Caco-2 (cell line): ENCODE measurements at regions of chr11 and their contacts with region 1.

Region 1: GRCh38 chr11:111918390-111919258 is at the start of gene C11orf52:
- DNase-seq: peak; percentile 92 to 94
- H3K4me3 ChIP-seq: peak within 1 kb of the TSS; percentile 49
- H3K4me3 Mint-ChIP-seq: peak within 1 kb of the TSS; percentile 79
- H3K27ac Mint-ChIP-seq: peak within 1 kb of the TSS; percentile 94
- H3K4me1 ChIP-seq: peaks cover 12% of the 10 kb centered on the region
- H3K4me1 Mint-ChIP-seq: peaks cover 21% of the 10 kb centered on the region
- H3K27me3 ChIP-seq: no peaks in the 10 kb centered on the region
- H3K27me3 Mint-ChIP-seq: no peaks in the 10 kb centered on the region
- CTCF ChIP-seq: peak; percentile 42 to 48
- total RNA-seq, gene C11orf52: 14.4 and 14.8 TPM in 2 replicates

Region 2: GRCh38 chr11:111788051-111788450 is 130.6 kb before region 1 on chr11:
- CTCF ChIA-PET with region 1: no interaction called
- POLR2A ChIA-PET with region 1: no interaction called
- intact Hi-C with region 1: no loop called
- DNase-seq: no peak
- H3K4me3 ChIP-seq: no peak overlapping the region
- H3K4me3 Mint-ChIP-seq: no peak overlapping the region
- H3K27ac Mint-ChIP-seq: no peak overlapping the region
- H3K4me1 ChIP-seq: no peaks in the 10 kb centered on the region
- H3K4me1 Mint-ChIP-seq: no peaks in the 10 kb centered on the region
- H3K27me3 ChIP-seq: no peaks in the 10 kb centered on the region
- H3K27me3 Mint-ChIP-seq: no peaks in the 10 kb centered on the region
- CTCF ChIP-seq: no peak

Region 3: DNA sequence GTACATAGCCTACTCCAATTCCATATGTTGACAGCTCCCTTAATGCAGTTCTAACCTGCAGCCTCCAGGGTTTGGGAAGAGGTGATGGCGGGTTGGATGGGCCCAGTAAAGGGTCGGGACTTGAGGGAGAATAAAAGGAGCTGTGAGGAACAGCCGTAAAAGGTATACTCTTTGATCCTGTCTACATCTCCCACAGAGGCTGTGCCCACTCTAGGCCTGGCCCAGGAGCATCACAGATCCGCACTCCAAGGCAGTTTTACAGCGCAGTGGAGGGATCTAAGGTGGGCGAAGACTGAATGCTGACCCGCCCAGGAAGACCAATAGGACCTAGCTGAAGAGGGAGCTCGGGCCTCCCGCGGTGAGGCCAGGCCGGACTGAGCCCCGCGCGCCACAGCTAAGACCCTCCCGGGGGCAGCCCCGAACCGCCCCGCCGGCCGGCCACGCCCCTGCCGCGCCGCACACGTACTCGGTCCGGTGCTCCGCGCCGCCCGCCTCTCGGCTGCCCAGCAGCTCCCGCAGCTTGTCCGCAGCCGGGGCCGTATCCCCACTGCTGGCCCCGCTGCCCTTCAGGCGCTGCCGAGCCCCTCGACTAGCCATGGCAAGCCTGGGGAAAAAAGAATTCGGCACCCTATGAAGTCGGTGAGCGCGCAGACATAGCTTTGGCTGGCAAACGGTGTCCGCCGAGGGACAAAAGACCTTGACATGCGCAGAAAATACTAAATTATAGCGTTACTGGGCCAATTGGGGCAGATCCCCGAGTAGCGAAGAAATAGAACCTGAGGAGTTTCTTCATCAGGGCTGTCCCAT is 47.5 kb before region 1 on chr11 and contains the start of gene ALG9:
- CTCF ChIA-PET with region 1: interaction called, 7 read pairs
- POLR2A ChIA-PET with region 1: interaction called, 9 read pairs
- intact Hi-C with region 1: loop called (anchors 2 kb)
- DNase-seq: peak; percentile 89 to 94
- H3K4me3 ChIP-seq: peak within 1 kb of the TSS; percentile 94
- H3K4me3 Mint-ChIP-seq: peak within 1 kb of the TSS; percentile 91
- H3K27ac Mint-ChIP-seq: peak within 1 kb of the TSS; percentile 53
- H3K4me1 ChIP-seq: 0 out of 2 replicates have a peak, but pooled peaks cover 3% of the 10 kb centered on the region
- H3K4me1 Mint-ChIP-seq: peaks cover 16% of the 10 kb centered on the region
- H3K27me3 ChIP-seq: no peaks in the 10 kb centered on the region
- H3K27me3 Mint-ChIP-seq: no peaks in the 10 kb centered on the region
- CTCF ChIP-seq: peak; percentile 55 to 63
- total RNA-seq, gene ALG9: 55.3 and 57.4 TPM in 2 replicates

Region 4: DNA sequence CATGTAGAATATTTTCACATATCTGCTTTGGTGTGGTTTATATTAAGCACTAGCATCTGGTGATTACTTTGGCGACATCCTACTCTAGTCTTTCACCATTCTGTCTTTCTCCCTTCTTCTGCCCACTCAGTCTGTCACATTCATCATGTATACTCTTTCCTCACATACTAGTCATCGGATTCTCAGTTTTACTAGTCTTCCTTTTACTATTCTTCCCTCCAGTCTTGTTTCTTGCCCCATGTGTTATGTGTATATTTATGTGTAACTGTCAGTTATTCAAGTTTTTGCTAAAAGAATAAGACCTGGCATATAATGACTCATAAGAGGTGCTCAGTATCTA is 14.0 kb after region 1 on chr11:
- CTCF ChIA-PET with region 1: interaction called, 14 read pairs
- POLR2A ChIA-PET with region 1: interaction called, 38 read pairs
- intact Hi-C with region 1: loop called (anchors 1 kb)
- DNase-seq: no peak
- H3K4me3 ChIP-seq: no peak overlapping the region
- H3K4me3 Mint-ChIP-seq: no peak overlapping the region
- H3K27ac Mint-ChIP-seq: no peak overlapping the region
- H3K4me1 ChIP-seq: peaks cover 17% of the 10 kb centered on the region
- H3K4me1 Mint-ChIP-seq: peaks cover 15% of the 10 kb centered on the region
- H3K27me3 ChIP-seq: no peaks in the 10 kb centered on the region
- H3K27me3 Mint-ChIP-seq: no peaks in the 10 kb centered on the region
- CTCF ChIP-seq: no peak

Region 5: DNA sequence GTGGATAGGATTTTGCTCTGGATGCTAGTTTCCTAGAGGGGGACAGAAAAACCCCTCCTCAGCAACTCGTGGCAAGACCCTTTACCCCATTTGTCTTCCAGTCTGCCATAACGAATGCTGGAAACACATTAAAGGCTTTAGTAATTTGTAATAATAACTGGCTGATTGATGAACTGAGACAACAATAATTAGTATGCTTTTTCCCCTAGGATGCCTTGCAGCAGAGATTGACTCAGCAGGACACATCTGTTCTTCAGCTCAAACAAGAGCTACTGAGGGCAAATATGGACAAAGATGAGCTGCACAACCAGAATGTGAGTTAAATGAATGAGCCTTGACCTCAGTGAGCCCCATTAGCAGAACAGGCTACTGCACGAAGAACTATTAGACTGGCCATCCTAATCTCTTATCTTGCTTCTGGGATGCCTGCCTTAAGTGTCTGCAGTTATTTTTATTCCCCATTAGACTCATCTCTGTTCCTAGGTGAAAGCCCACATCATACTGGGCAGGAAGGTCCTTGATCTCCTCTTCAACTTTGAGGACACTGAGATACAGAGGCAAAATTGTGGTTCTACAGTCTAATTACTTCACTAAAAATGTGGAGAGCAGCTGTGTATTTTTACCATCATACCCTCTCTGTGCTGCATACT is 73.7 kb after region 1 on chr11:
- CTCF ChIA-PET with region 1: interaction called, 10 read pairs
- POLR2A ChIA-PET with region 1: interaction called, 3 read pairs
- intact Hi-C with region 1: no loop called
- DNase-seq: no peak
- H3K4me3 ChIP-seq: no peak overlapping the region
- H3K4me3 Mint-ChIP-seq: no peak overlapping the region
- H3K27ac Mint-ChIP-seq: no peak overlapping the region
- H3K4me1 ChIP-seq: peaks cover 14% of the 10 kb centered on the region
- H3K4me1 Mint-ChIP-seq: peaks cover 8% of the 10 kb centered on the region
- H3K27me3 ChIP-seq: no peaks in the 10 kb centered on the region
- H3K27me3 Mint-ChIP-seq: no peaks in the 10 kb centered on the region
- CTCF ChIP-seq: no peak